PC-3 (cell line): ENCODE measurements at regions of chr5 and their contacts with region 1.

Region 1: DNA sequence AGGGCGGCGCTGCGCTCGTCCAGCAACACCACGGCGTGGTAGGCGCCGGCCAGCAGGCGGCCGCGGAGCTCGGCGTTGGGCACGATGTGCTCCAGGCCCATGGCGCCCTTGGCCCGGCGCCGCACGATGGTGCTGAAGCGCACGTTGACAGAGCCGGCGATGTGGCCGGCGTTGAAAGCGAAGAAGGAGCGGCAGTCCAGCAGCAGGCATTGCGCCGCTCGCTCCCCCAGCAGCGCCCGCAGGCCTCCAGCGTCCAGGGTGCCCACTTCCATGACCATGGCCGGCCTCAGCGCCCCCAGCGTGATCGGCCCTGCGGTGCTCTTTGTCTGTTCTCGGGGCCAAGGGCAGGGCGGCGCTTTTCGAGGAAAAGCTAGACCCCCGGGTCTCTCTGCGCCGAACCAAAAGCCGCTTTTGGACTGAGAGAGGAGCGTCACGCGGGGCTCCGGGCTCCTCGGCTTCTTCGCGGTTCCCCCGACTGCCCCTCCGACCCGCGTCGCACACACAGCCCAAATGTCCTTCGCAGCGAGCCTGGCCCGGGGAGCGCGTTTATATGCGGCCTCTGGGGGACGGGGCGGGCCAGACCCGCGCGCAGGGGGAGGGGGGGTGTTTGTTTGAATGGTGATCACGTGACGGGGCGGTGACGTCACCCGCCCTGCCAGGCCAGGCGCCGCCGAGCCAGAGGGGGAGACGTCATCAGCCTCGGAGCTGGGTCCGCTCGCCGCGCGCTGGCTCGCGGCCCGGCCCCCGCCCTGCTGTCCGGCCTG is at the start of gene DUSP1:
- DNase-seq: peak; percentile 97
- ATAC-seq: peak; percentile 54
- H3K4me3 ChIP-seq: peak within 1 kb of the TSS; percentile 90
- H3K27ac ChIP-seq: peak within 1 kb of the TSS; percentile 90
- H3K4me1 ChIP-seq: peaks cover 59% of the 10 kb centered on the region
- H3K27me3 ChIP-seq: no peaks in the 10 kb centered on the region
- CTCF ChIP-seq: peak; percentile 38; the same call in 1 of the 2 replicates
- total RNA-seq, gene DUSP1: 522 and 586 TPM in 2 replicates

Region 2: DNA sequence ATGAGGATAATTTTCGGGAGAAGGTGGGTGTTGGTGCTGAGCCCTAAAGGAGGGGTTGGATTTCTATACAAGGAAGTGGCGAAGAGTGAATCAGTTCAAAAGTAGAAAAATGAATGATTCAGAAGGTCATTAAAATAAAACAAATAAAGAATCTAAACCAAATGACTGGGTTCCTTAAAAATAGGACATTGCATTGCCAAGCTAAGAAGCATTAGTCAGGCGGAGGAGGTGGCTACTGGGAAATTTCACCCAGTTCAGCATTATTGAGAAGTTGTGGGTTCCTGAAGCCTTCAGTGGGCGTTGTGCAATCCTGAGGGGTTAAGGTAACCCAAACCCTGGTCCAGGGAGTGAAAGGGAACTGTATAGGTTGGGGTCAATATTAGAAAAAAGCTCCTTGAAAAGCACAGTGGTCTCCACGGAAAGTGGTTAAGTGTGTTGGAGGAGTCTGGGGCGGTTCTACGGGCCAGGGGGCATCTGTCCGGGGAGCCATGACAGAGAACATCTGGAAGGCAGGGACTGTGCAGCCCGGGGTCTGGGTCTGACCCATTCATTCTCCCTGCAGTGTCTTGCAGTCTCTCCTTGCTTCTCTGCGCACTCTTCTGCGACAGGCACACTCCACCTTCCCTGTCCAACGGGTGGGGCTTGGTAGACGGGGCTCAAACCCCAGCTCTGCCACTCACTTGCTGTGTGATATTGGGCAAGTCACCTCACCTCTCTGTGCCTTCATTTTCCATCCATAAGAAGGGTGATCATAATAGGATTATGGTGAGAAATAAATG is 27.8 kb after region 1 on chr5:
- CTCF ChIA-PET with region 1: interaction called, 4 read pairs
- POLR2A ChIA-PET with region 1: interaction called, 3 read pairs
- intact Hi-C with region 1: loop called (anchors 1 kb)
- DNase-seq: peak; percentile 91
- ATAC-seq: peak; percentile 78
- H3K4me3 ChIP-seq: no peak overlapping the region
- H3K27ac ChIP-seq: peak overlapping the region; percentile 94
- H3K4me1 ChIP-seq: peaks cover 65% of the 10 kb centered on the region
- H3K27me3 ChIP-seq: no peaks in the 10 kb centered on the region
- CTCF ChIP-seq: no peak

Region 3: DNA sequence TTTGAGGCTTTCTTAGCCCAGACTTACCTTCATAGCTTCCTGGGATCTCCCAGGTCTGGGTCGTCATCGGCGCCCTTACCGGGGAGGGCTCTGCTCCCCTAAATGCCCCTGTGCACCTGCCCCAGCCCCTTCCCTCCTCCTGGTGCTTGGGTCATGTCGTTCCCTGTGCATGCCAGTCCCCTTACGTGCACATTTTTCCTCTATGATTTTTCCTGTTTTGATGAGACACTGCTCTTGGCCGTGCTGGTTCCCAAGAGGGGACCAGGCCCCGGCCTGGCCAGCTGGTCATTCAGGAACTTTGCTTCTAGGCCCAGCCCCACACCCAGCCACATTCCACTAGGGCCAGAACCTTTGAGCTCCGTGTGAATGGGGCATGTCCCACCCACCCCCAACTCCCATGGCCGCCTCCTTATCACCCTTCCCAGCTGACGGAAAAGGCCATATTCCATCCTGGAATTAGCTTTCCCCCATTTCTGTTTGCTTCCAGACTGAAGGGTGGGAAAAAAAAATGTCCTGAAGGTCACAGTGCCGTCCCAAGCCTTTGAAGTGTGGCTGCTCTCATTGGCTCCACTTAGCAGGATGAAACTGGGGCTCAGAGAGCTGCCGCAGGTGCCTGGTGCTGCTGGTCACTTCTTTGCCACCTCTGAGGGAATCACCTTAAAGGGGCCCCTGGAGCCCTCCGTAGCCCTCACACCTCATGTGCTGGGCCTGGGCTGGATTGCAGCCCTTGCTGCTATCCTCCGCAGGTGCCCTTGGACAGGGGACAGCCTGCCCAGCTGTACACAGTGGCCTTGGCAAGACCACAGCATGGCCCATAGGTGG is 88.3 kb after region 1 on chr5:
- CTCF ChIA-PET with region 1: no interaction called
- POLR2A ChIA-PET with region 1: no interaction called
- intact Hi-C with region 1: loop called (anchors 2 kb)
- DNase-seq: peak; percentile 55
- ATAC-seq: peak; percentile 62
- H3K4me3 ChIP-seq: no peak overlapping the region
- H3K27ac ChIP-seq: peak overlapping the region; percentile 84
- H3K4me1 ChIP-seq: peaks cover 36% of the 10 kb centered on the region
- H3K27me3 ChIP-seq: no peaks in the 10 kb centered on the region
- CTCF ChIP-seq: no peak

Region 4: GRCh38 chr5:172902497-172903200 is 131.8 kb after region 1 on chr5:
- CTCF ChIA-PET with region 1: no interaction called
- POLR2A ChIA-PET with region 1: interaction called, 4 read pairs
- intact Hi-C with region 1: loop called (anchors 2 kb)
- DNase-seq: peak; percentile 73
- ATAC-seq: peak; percentile 45
- H3K4me3 ChIP-seq: no peak overlapping the region
- H3K27ac ChIP-seq: peak overlapping the region; percentile 96
- H3K4me1 ChIP-seq: peaks cover 48% of the 10 kb centered on the region
- H3K27me3 ChIP-seq: no peaks in the 10 kb centered on the region
- CTCF ChIP-seq: peak; percentile 62

Region 5: GRCh38 chr5:172932313-172933017 is 161.6 kb after region 1 on chr5:
- CTCF ChIA-PET with region 1: no interaction called
- POLR2A ChIA-PET with region 1: no interaction called
- intact Hi-C with region 1: loop called (anchors 2 kb)
- DNase-seq: peak; percentile 70
- ATAC-seq: peak; percentile 66
- H3K4me3 ChIP-seq: no peak overlapping the region
- H3K27ac ChIP-seq: peak overlapping the region; percentile 88
- H3K4me1 ChIP-seq: peaks cover 21% of the 10 kb centered on the region
- H3K27me3 ChIP-seq: no peaks in the 10 kb centered on the region
- CTCF ChIP-seq: peak; percentile 95

Region 6: GRCh38 chr5:173451031-173451430 is 680.2 kb after region 1 on chr5:
- CTCF ChIA-PET with region 1: no interaction called
- POLR2A ChIA-PET with region 1: no interaction called
- intact Hi-C with region 1: loop called (anchors 10 kb)
- DNase-seq: peak; percentile 39
- ATAC-seq: no peak
- H3K4me3 ChIP-seq: no peak overlapping the region
- H3K27ac ChIP-seq: peak overlapping the region; percentile 95
- H3K4me1 ChIP-seq: peaks cover 45% of the 10 kb centered on the region
- H3K27me3 ChIP-seq: no peaks in the 10 kb centered on the region
- CTCF ChIP-seq: peak; percentile 70